ENCODE measurements at regions of chr15 and their contacts with region 1.

Region 1: GRCh38 chr15:78618490-78618934 is 2.3 kb downstream of the CHRNA3 start:
- DNase-seq: peak; percentile 20
- H3K4me3 ChIP-seq: no peak overlapping the region
- H3K27ac ChIP-seq: no peak overlapping the region
- H3K4me1 ChIP-seq: peaks cover 9 to 30% (median 15%) of the 10 kb centered on the region in 3 donors
- H3K27me3 ChIP-seq: peaks cover 12 to 51% (median 19%) of the 10 kb centered on the region in 4 donors
- CTCF ChIP-seq: peak; percentile 78 to 89 (median 82)
- POLR2A ChIP-seq: no peak

Region 2: DNA sequence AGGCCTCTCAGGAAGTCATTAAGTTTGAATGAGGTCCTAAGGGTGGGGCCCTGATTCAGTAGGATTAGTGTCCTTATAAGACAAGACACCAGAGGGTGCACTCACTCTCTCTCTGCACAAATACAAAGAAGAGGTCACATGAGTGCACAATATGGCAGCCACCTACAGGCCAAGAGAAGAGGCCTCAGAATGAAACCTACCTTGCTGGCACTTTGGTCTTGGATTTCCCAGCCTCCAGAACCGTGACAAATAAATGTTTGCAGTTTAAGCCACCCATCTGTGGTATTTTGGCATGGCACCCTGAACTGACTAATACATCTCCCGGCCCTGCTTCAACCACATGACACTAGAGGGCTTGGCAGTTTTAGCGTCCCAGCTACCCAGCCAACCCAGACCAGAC is 96.4 kb after region 1 on chr15:
- intact Hi-C with region 1: loop called (anchors 5 kb)
- DNase-seq: no peak
- H3K4me3 ChIP-seq: no peak overlapping the region
- H3K27ac ChIP-seq: peak overlapping the region in 1 of 4 donors; percentile 17
- H3K4me1 ChIP-seq: peaks cover 0 to 9% (median 0%) of the 10 kb centered on the region in 3 donors
- H3K27me3 ChIP-seq: peaks cover 0 to 14% (median 2%) of the 10 kb centered on the region in 4 donors
- CTCF ChIP-seq: peak in 1 of 6 experiments; percentile 29
- POLR2A ChIP-seq: no peak

Region 3: DNA sequence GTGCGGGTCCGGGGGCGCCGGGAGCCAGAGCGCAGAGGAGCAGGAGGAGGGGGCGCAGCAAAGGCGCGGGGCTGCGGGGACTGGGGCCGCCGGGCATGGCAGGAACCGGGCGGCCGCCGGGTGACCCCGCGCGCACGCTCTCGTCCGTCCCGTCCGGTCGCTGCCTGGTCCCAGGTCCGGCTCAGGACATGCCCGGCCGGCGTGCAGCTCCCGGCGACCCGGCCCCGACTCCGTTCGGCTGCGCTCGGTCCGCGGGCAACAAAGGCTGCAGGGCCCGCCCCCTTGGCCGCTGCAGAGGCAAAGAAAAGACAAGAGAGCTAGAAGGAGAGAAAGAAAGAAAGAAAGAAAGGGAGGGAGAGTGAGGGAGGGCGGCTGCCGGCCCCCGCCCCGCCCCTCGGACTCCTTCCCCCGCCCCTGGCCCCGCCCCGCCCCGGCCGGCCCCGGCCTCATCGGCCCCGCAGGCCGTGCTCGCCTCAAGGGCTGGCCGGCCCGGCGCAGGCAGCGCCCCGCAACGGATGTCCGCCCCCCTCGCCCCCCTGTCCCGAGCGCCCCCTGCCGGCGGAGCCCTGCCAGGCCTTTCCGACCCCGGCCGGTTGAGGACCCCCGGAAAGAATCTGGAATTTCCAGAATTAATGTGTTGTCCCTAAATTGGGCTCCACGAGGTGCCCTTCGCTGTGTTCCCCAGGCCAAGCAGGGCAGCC is 192.8 kb after region 1 on chr15 and contains the start of gene ADAMTS7:
- intact Hi-C with region 1: no loop called
- DNase-seq: no peak
- H3K4me3 ChIP-seq: peak within 1 kb of the TSS; percentile 44 to 76 (median 66)
- H3K27ac ChIP-seq: peak within 1 kb of the TSS; percentile 27 to 77 (median 66)
- H3K4me1 ChIP-seq: peaks cover 12 to 25% (median 14%) of the 10 kb centered on the region in 3 donors
- H3K27me3 ChIP-seq: peaks cover 0 to 34% (median 0%) of the 10 kb centered on the region in 4 donors
- CTCF ChIP-seq: peak; percentile 35 to 74 (median 45)
- POLR2A ChIP-seq: no peak
- total RNA-seq, gene ADAMTS7: 0.42 to 0.76 (median 0.56) TPM

Measured in esophagus squamous epithelium (tissue), 5 donors.